SK-N-SH (cell line): ENCODE measurements at regions of chr2 and their contacts with region 1.

Region 1: GRCh38 chr2:10408649-10409579 is 39.2 kb downstream of the ODC1 start:
- DNase-seq: peak; percentile 97
- H3K4me3 ChIP-seq: peak overlapping the region in 1 of 2 experiments; percentile 26; a peak in 1 of 4 replicates
- H3K27ac ChIP-seq: peak overlapping the region in 1 of 2 experiments; percentile 62; a peak in 2 of 4 replicates
- H3K4me1 ChIP-seq: peaks cover 34 to 55% of the 10 kb centered on the region in 2 experiments
- H3K27me3 ChIP-seq: no peaks in the 10 kb centered on the region
- CTCF ChIP-seq: peak; percentile 99
- EP300 ChIP-seq: no peak
- RAD21 ChIP-seq: peak; percentile 99

Region 2: GRCh38 chr2:10072656-10073480 is 336.0 kb before region 1 on chr2:
- CTCF ChIA-PET with region 1: interaction called, 48 read pairs
- POLR2A ChIA-PET with region 1: no interaction called
- DNase-seq: peak; percentile 97
- H3K4me3 ChIP-seq: no peak overlapping the region; a peak in 1 of 4 replicates
- H3K27ac ChIP-seq: no peak overlapping the region
- H3K4me1 ChIP-seq: peaks cover 0 to 2% of the 10 kb centered on the region in 2 experiments; a peak in 1 of 4 replicates
- H3K27me3 ChIP-seq: peaks cover 17% of the 10 kb centered on the region; the same call in 1 of the 2 replicates
- CTCF ChIP-seq: peak; percentile 96
- EP300 ChIP-seq: no peak
- RAD21 ChIP-seq: peak; percentile 91

Region 3: DNA sequence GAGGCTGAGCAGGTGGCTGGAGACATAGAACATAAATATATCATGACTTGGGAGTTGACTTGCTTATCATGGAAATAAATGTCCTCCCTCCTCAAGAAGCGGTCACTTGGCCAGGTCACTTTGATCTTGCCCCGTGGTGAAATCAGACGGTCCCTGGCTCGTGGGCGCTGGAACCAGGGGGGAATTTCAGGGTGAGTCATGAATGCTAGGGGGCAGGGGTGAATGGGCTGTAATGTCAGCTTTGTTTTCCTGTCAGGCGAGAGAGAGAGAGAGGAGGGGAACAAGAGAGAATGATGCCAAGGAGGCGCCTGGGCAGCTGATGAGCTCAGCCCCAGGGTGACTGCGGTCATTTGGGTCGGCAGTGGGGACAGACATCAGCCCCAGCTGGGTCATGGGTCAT is 238.7 kb before region 1 on chr2:
- CTCF ChIA-PET with region 1: interaction called, 36 read pairs
- POLR2A ChIA-PET with region 1: interaction called, 8 read pairs
- DNase-seq: peak; percentile 63
- H3K4me3 ChIP-seq: no peak overlapping the region
- H3K27ac ChIP-seq: peak overlapping the region; percentile 37 to 90
- H3K4me1 ChIP-seq: peaks cover 19 to 63% of the 10 kb centered on the region in 2 experiments; a peak in 3 of 4 replicates
- H3K27me3 ChIP-seq: no peaks in the 10 kb centered on the region
- CTCF ChIP-seq: no peak
- EP300 ChIP-seq: no peak; a peak in 2 of 4 replicates
- RAD21 ChIP-seq: no peak

Region 4: GRCh38 chr2:10267551-10268465 is 141.1 kb before region 1 on chr2:
- CTCF ChIA-PET with region 1: interaction called, 11 read pairs
- POLR2A ChIA-PET with region 1: no interaction called
- DNase-seq: no peak
- H3K4me3 ChIP-seq: no peak overlapping the region
- H3K27ac ChIP-seq: no peak overlapping the region
- H3K4me1 ChIP-seq: peaks cover 4 to 7% of the 10 kb centered on the region in 2 experiments; a peak in 2 of 4 replicates
- H3K27me3 ChIP-seq: no peaks in the 10 kb centered on the region
- CTCF ChIP-seq: no peak
- EP300 ChIP-seq: no peak
- RAD21 ChIP-seq: no peak

Region 5: GRCh38 chr2:10331027-10331701 is 77.8 kb before region 1 on chr2:
- CTCF ChIA-PET with region 1: interaction called, 22 read pairs
- POLR2A ChIA-PET with region 1: no interaction called
- DNase-seq: no peak
- H3K4me3 ChIP-seq: no peak overlapping the region
- H3K27ac ChIP-seq: peak overlapping the region in 1 of 2 experiments; percentile 50; a peak in 2 of 4 replicates
- H3K4me1 ChIP-seq: peaks cover 23 to 68% of the 10 kb centered on the region in 2 experiments
- H3K27me3 ChIP-seq: no peaks in the 10 kb centered on the region
- CTCF ChIP-seq: no peak
- EP300 ChIP-seq: no peak
- RAD21 ChIP-seq: no peak

Region 6: DNA sequence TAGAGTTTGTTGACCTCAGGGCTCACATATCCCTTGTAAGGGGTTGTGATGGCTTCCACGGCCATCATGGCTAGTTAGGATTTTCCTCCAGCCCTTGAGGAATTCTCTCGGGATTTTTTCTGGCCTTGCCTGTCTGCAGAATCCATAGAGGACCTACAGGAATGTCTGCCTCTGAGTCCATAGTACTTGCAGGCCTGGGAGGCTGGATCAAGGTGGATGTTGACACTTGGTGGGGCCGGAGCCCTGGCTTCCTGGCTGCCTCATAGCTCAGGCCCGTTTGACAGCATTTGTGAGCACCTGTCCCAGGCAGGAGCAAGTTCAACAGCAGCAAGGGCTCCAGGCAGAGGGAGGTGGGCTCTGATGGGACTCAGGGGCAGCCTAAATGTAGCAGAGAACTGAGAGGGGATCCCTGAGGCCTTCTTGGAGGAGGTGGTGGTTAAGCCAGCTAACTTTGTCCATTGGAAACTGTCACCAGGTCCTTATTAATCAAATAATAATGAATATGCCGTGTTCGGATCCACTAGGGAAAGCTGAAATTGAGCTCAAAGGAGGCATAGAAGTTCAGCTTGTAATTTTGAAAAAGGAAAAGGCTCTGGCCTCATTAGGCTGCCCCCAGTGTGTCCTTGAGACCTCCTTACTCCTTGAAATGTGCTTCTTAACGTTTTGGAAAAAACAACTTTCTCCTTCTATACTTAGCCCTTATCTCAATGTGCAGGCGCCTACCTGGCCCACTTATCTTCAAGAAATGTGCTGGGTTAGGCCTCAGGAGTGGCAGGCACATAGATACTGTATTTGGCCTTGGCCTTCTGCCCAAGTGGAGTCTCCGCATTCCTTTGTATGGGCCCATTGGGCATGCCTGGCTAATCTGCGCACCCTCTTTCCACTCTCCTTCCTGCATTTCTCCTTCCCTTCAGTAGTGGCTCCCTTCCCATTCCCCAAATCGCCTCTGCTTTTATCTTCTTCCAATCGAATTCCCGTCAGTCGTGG is 39.4 kb before region 1 on chr2:
- CTCF ChIA-PET with region 1: interaction called, 23 read pairs
- POLR2A ChIA-PET with region 1: no interaction called
- DNase-seq: no peak
- H3K4me3 ChIP-seq: no peak overlapping the region
- H3K27ac ChIP-seq: no peak overlapping the region; a peak in 1 of 4 replicates
- H3K4me1 ChIP-seq: peaks cover 0 to 71% of the 10 kb centered on the region in 2 experiments; a peak in 1 of 4 replicates
- H3K27me3 ChIP-seq: no peaks in the 10 kb centered on the region
- CTCF ChIP-seq: no peak
- EP300 ChIP-seq: no peak
- RAD21 ChIP-seq: no peak